Dendritic cell treated with granulocyte-macrophage colony-stimulating factor and Interleukin-4, amounts not matched to agents 40 ng/mL and 50 ng/mL, for 4 days (primary cell): ENCODE measurements at regions of chr15 and their contacts with region 1.

Region 1: DNA sequence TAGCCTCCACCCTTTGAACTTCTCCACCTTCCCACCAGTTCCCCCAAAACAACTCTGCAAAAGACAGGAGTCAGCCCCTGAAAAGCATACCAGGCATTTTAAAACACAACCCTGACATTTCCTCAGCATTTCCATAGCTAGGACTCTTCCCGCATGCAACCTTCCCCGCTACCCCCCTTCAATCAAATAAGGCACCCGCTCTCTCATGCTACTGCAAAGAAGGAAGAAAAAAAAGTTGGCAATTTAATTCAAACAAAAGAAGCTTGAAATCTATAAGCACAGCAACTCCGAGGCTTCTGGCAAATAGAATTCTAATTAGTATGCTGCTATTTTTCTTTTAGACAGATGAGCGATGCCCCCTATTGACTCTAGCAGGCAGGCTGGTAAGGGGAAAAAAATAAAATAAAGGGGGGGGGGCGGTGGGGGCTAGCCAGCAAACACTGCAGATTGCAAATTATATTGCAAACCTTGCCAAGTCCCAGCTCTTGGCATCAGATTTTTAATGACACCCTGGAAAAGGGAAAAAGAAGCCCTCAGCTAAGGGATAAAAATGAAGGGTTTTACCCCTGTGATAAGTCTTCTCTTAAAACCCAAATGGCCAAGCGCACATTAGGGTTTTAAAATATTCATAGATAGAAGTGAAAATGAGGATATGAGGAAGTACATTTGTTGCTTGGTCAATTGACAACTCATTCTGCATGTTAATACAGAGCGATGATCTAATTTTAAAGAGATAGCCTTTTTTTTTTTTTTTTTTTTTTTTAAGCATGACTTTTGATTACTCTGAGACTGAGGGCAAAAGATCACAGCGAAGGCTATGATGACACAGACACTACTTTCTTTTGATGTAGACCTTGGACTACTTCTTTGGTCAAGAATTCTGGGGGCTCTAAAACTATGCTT is 255.2 kb downstream of the NR2F2 start:
- H3K4me3 Mint-ChIP-seq: no peak overlapping the region
- H3K27ac Mint-ChIP-seq: peak overlapping the region; percentile 81
- H3K4me1 Mint-ChIP-seq: peaks cover 40% of the 10 kb centered on the region
- H3K27me3 Mint-ChIP-seq: peaks cover 15% of the 10 kb centered on the region

Region 2: DNA sequence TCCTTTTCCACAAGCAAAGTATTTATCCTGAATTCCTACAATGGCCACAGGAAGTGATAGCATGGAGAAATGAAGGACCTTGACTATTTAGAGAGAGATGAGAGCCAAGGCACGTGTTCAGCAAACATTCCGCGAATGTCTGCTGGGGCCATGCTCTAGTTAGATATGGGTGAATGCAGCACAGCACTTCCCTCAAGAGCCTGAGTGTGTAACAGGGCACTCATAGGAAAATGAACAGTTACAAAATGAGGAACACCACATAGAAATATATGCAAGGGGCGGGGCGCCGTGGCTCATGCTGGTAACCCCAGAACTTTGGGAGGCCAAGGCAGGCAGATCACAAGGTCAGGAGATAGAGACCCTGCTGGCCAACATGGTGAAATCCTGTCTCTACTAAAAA is 151.7 kb after region 1 on chr15:
- intact Hi-C with region 1: no loop called
- H3K4me3 Mint-ChIP-seq: no peak overlapping the region
- H3K27ac Mint-ChIP-seq: no peak overlapping the region
- H3K4me1 Mint-ChIP-seq: peaks cover 7% of the 10 kb centered on the region
- H3K27me3 Mint-ChIP-seq: no peaks in the 10 kb centered on the region

Region 3: DNA sequence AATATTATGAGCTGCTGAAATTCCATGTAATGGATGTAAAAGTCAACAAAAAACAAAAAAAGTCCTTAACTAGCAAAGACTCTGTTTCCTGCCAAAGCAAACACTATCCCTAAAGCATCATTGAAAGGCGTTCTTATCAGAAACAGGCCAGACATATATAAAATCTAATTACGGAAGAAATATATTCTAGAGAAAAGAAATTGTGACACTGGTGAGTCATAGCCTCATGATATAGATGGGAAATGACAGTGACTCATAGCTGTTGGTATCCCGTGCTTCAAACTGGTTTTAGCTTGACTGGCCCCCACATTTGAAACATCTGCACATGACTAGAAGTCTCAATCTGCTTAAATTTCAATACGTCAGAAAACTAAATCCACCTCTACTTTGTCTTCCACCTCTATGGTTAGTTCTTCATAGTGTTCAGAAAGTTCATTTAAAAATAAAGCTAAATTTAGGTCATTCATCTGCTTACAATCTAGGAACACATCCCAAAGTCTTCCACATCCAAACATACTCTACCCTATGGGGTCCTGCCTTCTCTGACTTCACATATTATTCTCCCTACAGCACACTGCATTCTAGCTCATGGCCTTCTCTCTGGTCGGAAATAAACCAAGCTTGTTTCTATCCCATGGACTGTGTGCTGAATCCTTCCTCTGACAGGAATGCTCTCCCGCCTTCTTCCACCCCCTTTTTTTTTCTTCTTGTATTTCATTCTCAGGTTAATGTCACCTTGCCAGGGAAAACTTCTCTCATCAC is 918.5 kb after region 1 on chr15:
- intact Hi-C with region 1: loop called (anchors 10 kb)
- H3K4me3 Mint-ChIP-seq: no peak overlapping the region
- H3K27ac Mint-ChIP-seq: peak overlapping the region; percentile 84
- H3K4me1 Mint-ChIP-seq: peaks cover 23% of the 10 kb centered on the region
- H3K27me3 Mint-ChIP-seq: no peaks in the 10 kb centered on the region